ENCODE measurements at regions of chr22 and their contacts with region 1.

Region 1: DNA sequence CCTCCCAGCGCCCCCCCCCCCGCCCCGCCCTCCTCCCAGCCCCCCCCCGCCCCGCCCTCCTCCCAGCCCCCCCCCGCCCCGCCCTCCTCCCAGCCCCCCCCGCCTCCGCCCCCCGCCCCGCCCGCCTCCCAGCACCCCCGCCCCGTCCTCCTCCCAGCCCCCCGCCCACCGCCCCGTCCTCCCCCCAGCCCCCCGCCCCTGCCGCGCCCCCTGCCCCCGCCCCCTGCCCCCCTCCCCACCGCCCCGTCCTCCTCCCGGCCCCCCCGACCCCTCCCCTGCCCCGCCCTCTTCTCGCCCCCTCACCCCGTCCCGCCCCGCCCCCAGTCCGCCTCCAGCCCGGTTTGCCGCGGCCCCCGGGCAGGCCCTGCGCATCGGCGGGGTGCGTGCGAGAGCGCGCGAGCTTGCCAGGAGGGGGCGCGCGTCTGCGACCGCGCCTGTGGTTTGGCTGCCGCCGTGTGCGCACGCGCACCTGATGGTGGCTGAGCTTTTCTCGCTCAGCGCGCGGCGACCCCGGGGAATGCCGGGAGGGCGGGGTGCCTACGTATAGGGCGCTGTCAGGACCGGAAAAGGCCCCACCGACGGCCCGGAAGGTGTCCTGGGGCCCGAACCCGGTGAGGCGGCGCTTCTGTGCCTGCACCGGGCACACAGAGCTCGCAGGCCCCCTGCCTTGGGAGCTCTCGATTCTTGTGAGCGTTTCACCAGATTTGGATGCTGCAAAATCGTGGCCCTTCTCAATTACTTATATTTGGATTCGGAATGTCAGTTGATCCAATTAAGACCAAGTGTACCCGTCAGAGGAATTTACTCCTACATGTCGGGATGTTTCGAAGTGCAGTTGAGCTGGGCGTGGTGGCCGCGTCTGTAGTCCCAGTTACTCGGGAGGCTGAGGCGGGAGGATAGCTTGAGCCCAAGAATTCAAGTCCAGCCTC is 501 bp upstream of the TTLL12 start:
- DNase-seq: peak; percentile 94 to 97 (median 97)
- H3K4me3 ChIP-seq: peak overlapping the region; percentile 39 to 58
- H3K4me3 Mint-ChIP-seq: peak overlapping the region; percentile 82 to 87 (median 83)
- H3K27ac ChIP-seq: peak overlapping the region; percentile 96
- H3K27ac Mint-ChIP-seq: peak overlapping the region; percentile 96 to 99 (median 98)
- H3K4me1 ChIP-seq: peaks cover 24% of the 10 kb centered on the region
- H3K4me1 Mint-ChIP-seq: peaks cover 4 to 44% (median 18%) of the 10 kb centered on the region in 4 donors
- H3K27me3 ChIP-seq: no peaks in the 10 kb centered on the region
- H3K27me3 Mint-ChIP-seq: peaks cover 0 to 3% of the 10 kb centered on the region in 2 donors

Region 2: GRCh38 chr22:42614312-42615091 is 572.9 kb before region 1 on chr22 and contains the start of gene POLDIP3:
- CTCF ChIA-PET with region 1: no interaction called
- POLR2A ChIA-PET with region 1: interaction called, 16 read pairs
- intact Hi-C with region 1: no loop called
- DNase-seq: peak; percentile 99
- H3K4me3 ChIP-seq: peak within 1 kb of the TSS; percentile 74 to 84
- H3K4me3 Mint-ChIP-seq: peak within 1 kb of the TSS; percentile 88 to 98 (median 96)
- H3K27ac ChIP-seq: peak within 1 kb of the TSS; percentile 90
- H3K27ac Mint-ChIP-seq: peak within 1 kb of the TSS; percentile 99 to 100 (median 100)
- H3K4me1 ChIP-seq: peaks cover 54% of the 10 kb centered on the region
- H3K4me1 Mint-ChIP-seq: peaks cover 35 to 70% (median 47%) of the 10 kb centered on the region in 4 donors
- H3K27me3 ChIP-seq: no peaks in the 10 kb centered on the region
- H3K27me3 Mint-ChIP-seq: no peaks in the 10 kb centered on the region
- total RNA-seq, gene POLDIP3: 80.6 to 82.3 TPM

Region 3: GRCh38 chr22:43014869-43015676 is 172.4 kb before region 1 on chr22 and contains the start of gene PACSIN2:
- CTCF ChIA-PET with region 1: no interaction called
- POLR2A ChIA-PET with region 1: interaction called, 8 read pairs
- intact Hi-C with region 1: loop called (anchors 1 kb)
- DNase-seq: peak; percentile 97 to 99 (median 97)
- H3K4me3 ChIP-seq: peak within 1 kb of the TSS; percentile 74 to 76
- H3K4me3 Mint-ChIP-seq: peak within 1 kb of the TSS; percentile 97 to 99 (median 98)
- H3K27ac ChIP-seq: peak within 1 kb of the TSS; percentile 79
- H3K27ac Mint-ChIP-seq: peak within 1 kb of the TSS; percentile 92 to 99 (median 97)
- H3K4me1 ChIP-seq: peaks cover 27% of the 10 kb centered on the region
- H3K4me1 Mint-ChIP-seq: peaks cover 22 to 59% (median 37%) of the 10 kb centered on the region in 4 donors
- H3K27me3 ChIP-seq: no peaks in the 10 kb centered on the region
- H3K27me3 Mint-ChIP-seq: no peaks in the 10 kb centered on the region
- total RNA-seq, gene PACSIN2: 54.5 to 55.0 TPM

Region 4: GRCh38 chr22:43110444-43110926 is 77.0 kb before region 1 on chr22 and contains the start of gene BIK:
- CTCF ChIA-PET with region 1: interaction called, 3 read pairs
- POLR2A ChIA-PET with region 1: no interaction called
- intact Hi-C with region 1: loop called (anchors 1 kb)
- DNase-seq: peak; percentile 32 to 58 (median 34)
- H3K4me3 ChIP-seq: peak within 1 kb of the TSS; percentile 28 to 74
- H3K4me3 Mint-ChIP-seq: peak within 1 kb of the TSS; percentile 80 to 91 (median 88)
- H3K27ac ChIP-seq: peak within 1 kb of the TSS; percentile 35
- H3K27ac Mint-ChIP-seq: peak within 1 kb of the TSS in 5 of 7 donors; percentile 42 to 87 (median 81)
- H3K4me1 ChIP-seq: peaks cover 12% of the 10 kb centered on the region
- H3K4me1 Mint-ChIP-seq: peaks cover 4 to 11% (median 7%) of the 10 kb centered on the region in 4 donors
- H3K27me3 ChIP-seq: no peaks in the 10 kb centered on the region
- H3K27me3 Mint-ChIP-seq: no peaks in the 10 kb centered on the region
- total RNA-seq, gene BIK: 2.5 to 2.7 TPM

Region 5: GRCh38 chr22:43136255-43136654 is 51.2 kb before region 1 on chr22:
- CTCF ChIA-PET with region 1: no interaction called
- POLR2A ChIA-PET with region 1: no interaction called
- intact Hi-C with region 1: no loop called
- DNase-seq: peak in 4 of 5 donors; percentile 14 to 25 (median 22)
- H3K4me3 ChIP-seq: no peak overlapping the region
- H3K4me3 Mint-ChIP-seq: no peak overlapping the region
- H3K27ac ChIP-seq: no peak overlapping the region
- H3K27ac Mint-ChIP-seq: peak overlapping the region in 1 of 7 donors; percentile 47
- H3K4me1 ChIP-seq: peaks cover 4% of the 10 kb centered on the region
- H3K4me1 Mint-ChIP-seq: peaks cover 0 to 6% (median 3%) of the 10 kb centered on the region in 4 donors
- H3K27me3 ChIP-seq: no peaks in the 10 kb centered on the region
- H3K27me3 Mint-ChIP-seq: no peaks in the 10 kb centered on the region

Region 6: DNA sequence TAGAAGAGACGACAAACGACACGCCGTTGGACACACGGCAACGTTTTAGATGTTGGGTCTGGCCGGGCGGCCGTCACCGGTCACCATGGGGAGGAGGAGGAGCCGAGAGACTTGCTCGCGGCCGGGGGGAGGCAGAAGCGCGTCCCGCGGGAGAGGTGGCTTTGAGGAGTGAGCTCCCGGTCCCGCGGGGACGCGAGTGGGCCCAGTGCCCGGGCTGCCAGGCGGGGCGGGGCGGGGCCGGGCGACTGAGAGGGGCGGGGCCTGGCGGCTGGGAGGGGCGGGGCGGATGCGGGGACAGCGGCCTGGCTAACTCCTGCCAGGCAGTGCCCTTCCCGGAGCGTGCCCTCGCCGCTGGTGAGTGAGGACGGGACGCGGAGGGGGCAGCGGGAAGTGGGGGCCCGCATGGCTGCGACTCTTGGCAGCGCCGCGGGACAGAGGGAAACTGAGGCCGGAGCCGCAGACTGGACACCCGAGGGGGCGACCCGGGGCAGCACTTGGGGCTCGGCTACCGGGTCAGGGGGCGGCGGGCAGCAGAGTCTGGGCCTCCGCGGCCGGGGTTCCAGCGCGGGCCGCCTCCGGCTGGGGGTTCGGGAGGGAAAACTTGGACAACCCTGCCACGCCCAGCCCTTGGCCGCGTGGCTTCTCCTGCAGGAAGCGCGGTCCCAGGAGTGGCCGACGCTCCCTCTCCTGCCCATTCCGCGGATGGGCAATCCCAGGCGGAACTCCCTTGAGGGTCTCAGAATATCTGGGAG is 36.0 kb before region 1 on chr22 and contains the start of gene TSPO:
- CTCF ChIA-PET with region 1: interaction called, 5 read pairs
- POLR2A ChIA-PET with region 1: interaction called, 28 read pairs
- intact Hi-C with region 1: loop called (anchors 2 kb)
- DNase-seq: peak; percentile 41 to 53 (median 45)
- H3K4me3 ChIP-seq: peak within 1 kb of the TSS; percentile 61 to 88
- H3K4me3 Mint-ChIP-seq: peak within 1 kb of the TSS; percentile 87 to 97 (median 90)
- H3K27ac ChIP-seq: peak within 1 kb of the TSS; percentile 68
- H3K27ac Mint-ChIP-seq: peak within 1 kb of the TSS; percentile 83 to 95 (median 92)
- H3K4me1 ChIP-seq: peaks cover 18% of the 10 kb centered on the region
- H3K4me1 Mint-ChIP-seq: peaks cover 7 to 25% (median 15%) of the 10 kb centered on the region in 4 donors
- H3K27me3 ChIP-seq: no peaks in the 10 kb centered on the region
- H3K27me3 Mint-ChIP-seq: no peaks in the 10 kb centered on the region
- total RNA-seq, gene TSPO: 66.9 to 71.0 TPM

Region 7: GRCh38 chr22:43222262-43222661 is 34.8 kb after region 1 on chr22:
- CTCF ChIA-PET with region 1: no interaction called
- POLR2A ChIA-PET with region 1: no interaction called
- intact Hi-C with region 1: no loop called
- DNase-seq: no peak
- H3K4me3 ChIP-seq: no peak overlapping the region
- H3K4me3 Mint-ChIP-seq: no peak overlapping the region
- H3K27ac ChIP-seq: no peak overlapping the region
- H3K27ac Mint-ChIP-seq: no peak overlapping the region
- H3K4me1 ChIP-seq: no peaks in the 10 kb centered on the region
- H3K4me1 Mint-ChIP-seq: no peaks in the 10 kb centered on the region
- H3K27me3 ChIP-seq: no peaks in the 10 kb centered on the region
- H3K27me3 Mint-ChIP-seq: peaks cover 0 to 4% of the 10 kb centered on the region in 2 donors

Region 8: GRCh38 chr22:43346521-43346929 is 159.1 kb after region 1 on chr22:
- CTCF ChIA-PET with region 1: interaction called, 10 read pairs
- POLR2A ChIA-PET with region 1: no interaction called
- intact Hi-C with region 1: no loop called
- DNase-seq: peak; percentile 47 to 61 (median 48)
- H3K4me3 ChIP-seq: no peak overlapping the region
- H3K4me3 Mint-ChIP-seq: no peak overlapping the region
- H3K27ac ChIP-seq: no peak overlapping the region
- H3K27ac Mint-ChIP-seq: no peak overlapping the region
- H3K4me1 ChIP-seq: no peaks in the 10 kb centered on the region
- H3K4me1 Mint-ChIP-seq: peaks cover 7 to 20% (median 11%) of the 10 kb centered on the region in 4 donors
- H3K27me3 ChIP-seq: no peaks in the 10 kb centered on the region
- H3K27me3 Mint-ChIP-seq: peaks cover 25 to 47% of the 10 kb centered on the region in 2 donors